Activated CD8-positive, alpha-beta memory T cell treated with anti-CD3 and anti-CD28 coated beads, Interleukin-2, amount 10 ng/mL, durations not matched to agents 7 days and 5 days (primary cell): ENCODE measurements at regions of chr19 and their contacts with region 1.

Region 1: GRCh38 chr19:10517760-10518443 is 655 bp upstream of the S1PR5 start:
- DNase-seq: no peak
- ATAC-seq: peak; percentile 28
- H3K4me3 Mint-ChIP-seq: peak overlapping the region; percentile 4
- H3K27ac Mint-ChIP-seq: no peak overlapping the region
- H3K4me1 Mint-ChIP-seq: peaks cover 43% of the 10 kb centered on the region
- H3K27me3 Mint-ChIP-seq: peaks cover 68% of the 10 kb centered on the region

Region 2: GRCh38 chr19:10424011-10424637 is 93.8 kb before region 1 on chr19:
- CTCF ChIA-PET with region 1: no interaction called
- DNase-seq: peak; percentile 78
- ATAC-seq: peak; percentile 16
- H3K4me3 Mint-ChIP-seq: peak overlapping the region; percentile 81
- H3K27ac Mint-ChIP-seq: peak overlapping the region; percentile 95
- H3K4me1 Mint-ChIP-seq: peaks cover 82% of the 10 kb centered on the region
- H3K27me3 Mint-ChIP-seq: peaks cover 2% of the 10 kb centered on the region

Region 3: DNA sequence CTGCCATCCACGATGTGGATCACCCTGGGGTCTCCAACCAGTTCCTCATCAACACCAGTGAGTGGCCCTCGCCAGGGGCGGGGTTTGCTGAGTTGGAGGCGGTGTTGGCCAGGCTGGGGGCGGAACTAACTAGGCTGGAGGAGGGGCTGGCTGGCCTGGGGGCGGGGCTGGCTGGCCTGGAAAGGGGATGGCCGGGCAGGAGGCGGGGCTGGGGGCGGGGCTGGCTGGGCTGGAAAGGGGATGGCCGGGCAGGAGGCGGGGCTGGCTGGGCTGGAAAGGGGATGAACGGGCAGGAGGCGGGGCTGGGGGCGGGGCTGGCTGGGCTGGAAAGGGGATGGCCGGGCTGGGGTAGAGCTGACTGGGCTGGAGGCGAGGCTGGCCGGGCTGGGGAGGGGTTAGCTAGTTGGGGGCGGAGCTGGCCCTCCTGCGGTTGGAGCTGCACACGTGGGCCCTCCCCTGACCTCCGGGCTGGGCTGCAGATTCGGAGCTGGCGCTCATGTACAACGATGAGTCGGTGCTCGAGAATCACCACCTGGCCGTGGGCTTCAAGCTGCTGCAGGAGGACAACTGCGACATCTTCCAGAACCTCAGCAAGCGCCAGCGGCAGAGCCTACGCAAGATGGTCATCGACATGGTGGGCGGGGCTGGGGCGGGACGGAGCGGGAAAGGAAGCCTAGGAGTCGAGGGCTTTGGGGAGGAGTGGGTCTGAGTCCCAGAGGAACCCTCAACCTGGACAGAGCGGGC is 56.7 kb before region 1 on chr19:
- CTCF ChIA-PET with region 1: no interaction called
- DNase-seq: peak; percentile 93
- ATAC-seq: peak; percentile 94
- H3K4me3 Mint-ChIP-seq: no peak overlapping the region
- H3K27ac Mint-ChIP-seq: peak overlapping the region; percentile 43
- H3K4me1 Mint-ChIP-seq: peaks cover 9% of the 10 kb centered on the region
- H3K27me3 Mint-ChIP-seq: no peaks in the 10 kb centered on the region

Region 4: GRCh38 chr19:10505583-10506229 is 12.2 kb before region 1 on chr19:
- CTCF ChIA-PET with region 1: interaction called, 65 read pairs
- DNase-seq: peak; percentile 91
- ATAC-seq: peak; percentile 10
- H3K4me3 Mint-ChIP-seq: no peak overlapping the region
- H3K27ac Mint-ChIP-seq: peak overlapping the region; percentile 66
- H3K4me1 Mint-ChIP-seq: peaks cover 37% of the 10 kb centered on the region
- H3K27me3 Mint-ChIP-seq: no peaks in the 10 kb centered on the region